Vagina (tissue), 2 donors: ENCODE measurements at regions of chr6 and their contacts with region 1.

Region 1: GRCh38 chr6:44104481-44105021 is 22.7 kb downstream of the MRPL14 start:
- DNase-seq: no peak
- H3K4me3 ChIP-seq: no peak overlapping the region
- H3K27ac ChIP-seq: peak overlapping the region; percentile 13
- H3K4me1 ChIP-seq: peaks cover 27% of the 10 kb centered on the region
- H3K27me3 ChIP-seq: no peaks in the 10 kb centered on the region
- CTCF ChIP-seq: no peak
- POLR2A ChIP-seq: no peak

Region 2: GRCh38 chr6:44138717-44139350 is 34.3 kb after region 1 on chr6:
- intact Hi-C with region 1: no loop called
- DNase-seq: no peak
- H3K4me3 ChIP-seq: no peak overlapping the region
- H3K27ac ChIP-seq: no peak overlapping the region
- H3K4me1 ChIP-seq: no peaks in the 10 kb centered on the region
- H3K27me3 ChIP-seq: no peaks in the 10 kb centered on the region
- CTCF ChIP-seq: no peak
- POLR2A ChIP-seq: no peak

Region 3: GRCh38 chr6:45880159-45880558 is 1775.6 kb after region 1 on chr6:
- intact Hi-C with region 1: loop called (anchors 5 kb)
- DNase-seq: no peak
- H3K4me3 ChIP-seq: no peak overlapping the region
- H3K27ac ChIP-seq: peak overlapping the region; percentile 37
- H3K4me1 ChIP-seq: peaks cover 23% of the 10 kb centered on the region
- H3K27me3 ChIP-seq: no peaks in the 10 kb centered on the region
- CTCF ChIP-seq: no peak
- POLR2A ChIP-seq: no peak